PC-9 (cell line): ENCODE measurements at regions of chr22 and their contacts with region 1.

Region 1: DNA sequence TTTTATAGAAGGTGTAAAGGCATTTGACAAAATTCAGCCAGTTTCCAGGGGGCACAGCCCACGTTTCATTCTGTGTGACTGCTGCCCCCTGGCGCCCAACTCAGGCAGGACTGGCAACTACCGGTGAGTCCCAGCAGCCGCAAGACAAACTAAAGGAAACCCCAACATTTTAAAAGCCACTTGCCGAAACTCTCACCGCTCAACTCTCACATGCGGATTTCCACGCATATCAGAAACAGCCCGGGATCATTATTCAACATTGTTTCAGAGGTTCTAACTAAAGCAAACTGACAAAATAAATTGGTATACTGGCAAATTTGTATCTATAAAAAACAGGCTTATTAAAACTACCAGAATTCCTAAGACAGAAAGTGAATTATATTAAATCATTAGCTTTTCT is 48.2 kb downstream of the MORC2 start:
- DNase-seq: peak; percentile 46 to 74
- H3K4me3 ChIP-seq: no peak overlapping the region
- H3K27ac ChIP-seq: no peak overlapping the region
- H3K4me1 ChIP-seq: no peaks in the 10 kb centered on the region
- H3K27me3 ChIP-seq: no peaks in the 10 kb centered on the region
- CTCF ChIP-seq: peak; percentile 98

Region 2: GRCh38 chr22:31248138-31248745 is 327.8 kb after region 1 on chr22:
- CTCF ChIA-PET with region 1: no interaction called
- POLR2A ChIA-PET with region 1: interaction called, 15 read pairs
- intact Hi-C with region 1: no loop called
- DNase-seq: peak; percentile 80
- H3K4me3 ChIP-seq: peak overlapping the region; percentile 47
- H3K27ac ChIP-seq: no peak overlapping the region
- H3K4me1 ChIP-seq: peaks cover 28% of the 10 kb centered on the region
- H3K27me3 ChIP-seq: no peaks in the 10 kb centered on the region
- CTCF ChIP-seq: no peak

Region 3: GRCh38 chr22:31367426-31367825 is 447.0 kb after region 1 on chr22:
- CTCF ChIA-PET with region 1: no interaction called
- POLR2A ChIA-PET with region 1: no interaction called
- intact Hi-C with region 1: no loop called
- DNase-seq: no peak
- H3K4me3 ChIP-seq: no peak overlapping the region
- H3K27ac ChIP-seq: no peak overlapping the region
- H3K4me1 ChIP-seq: no peaks in the 10 kb centered on the region
- H3K27me3 ChIP-seq: no peaks in the 10 kb centered on the region
- CTCF ChIP-seq: no peak

Region 4: GRCh38 chr22:31630331-31631329 is 710.2 kb after region 1 on chr22:
- CTCF ChIA-PET with region 1: no interaction called
- POLR2A ChIA-PET with region 1: no interaction called
- intact Hi-C with region 1: no loop called
- DNase-seq: peak; percentile 78 to 95
- H3K4me3 ChIP-seq: peak overlapping the region; percentile 84
- H3K27ac ChIP-seq: peak overlapping the region; percentile 51
- H3K4me1 ChIP-seq: peaks cover 39% of the 10 kb centered on the region
- H3K27me3 ChIP-seq: no peaks in the 10 kb centered on the region
- CTCF ChIP-seq: no peak; the same call in 1 of the 2 replicates